Calu3 (cell line): ENCODE measurements at regions of chr2 and their contacts with region 1.

Region 1: DNA sequence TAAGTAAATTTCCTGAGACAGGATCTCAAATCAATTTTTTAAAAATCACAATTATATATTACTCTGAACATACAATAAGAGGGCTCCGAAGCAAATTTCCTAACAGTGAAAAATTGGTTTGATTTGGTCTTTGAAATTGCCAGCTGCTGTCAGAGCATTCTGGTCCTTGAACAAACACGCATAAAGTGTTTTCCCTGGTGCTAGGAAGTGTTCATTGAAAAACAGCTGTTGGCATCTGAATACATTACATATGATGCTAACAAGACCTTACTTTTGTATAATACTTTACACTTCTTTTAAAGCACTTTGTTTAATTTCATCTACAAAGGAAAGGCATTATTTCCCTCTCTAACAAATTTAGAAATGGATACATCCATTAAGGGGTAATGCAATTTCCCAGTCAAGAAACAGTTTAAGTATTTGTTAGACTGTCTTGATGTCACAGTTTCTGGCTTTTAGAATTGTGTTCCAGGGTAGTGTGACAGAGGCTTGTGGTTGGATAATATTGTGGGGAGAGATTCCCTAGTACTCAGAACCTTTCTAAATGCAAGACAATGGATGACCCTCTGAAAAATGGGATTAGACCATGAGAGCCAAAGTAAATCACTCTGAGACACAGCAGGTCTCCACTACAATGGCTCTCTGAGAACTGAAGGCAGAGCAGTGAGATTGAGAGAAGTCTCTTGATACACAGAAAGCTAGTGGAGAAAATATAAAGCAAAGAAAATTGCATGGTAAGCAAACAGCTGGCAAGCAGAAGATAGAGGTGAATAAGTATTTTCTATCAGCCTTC is 299.0 kb downstream of the TRIB2 start:
- DNase-seq: no peak
- H3K4me3 Mint-ChIP-seq: no peak overlapping the region
- H3K27ac Mint-ChIP-seq: no peak overlapping the region
- H3K4me1 Mint-ChIP-seq: no peaks in the 10 kb centered on the region
- H3K27me3 Mint-ChIP-seq: peaks cover 23% of the 10 kb centered on the region
- CTCF ChIP-seq: no peak

Region 2: DNA sequence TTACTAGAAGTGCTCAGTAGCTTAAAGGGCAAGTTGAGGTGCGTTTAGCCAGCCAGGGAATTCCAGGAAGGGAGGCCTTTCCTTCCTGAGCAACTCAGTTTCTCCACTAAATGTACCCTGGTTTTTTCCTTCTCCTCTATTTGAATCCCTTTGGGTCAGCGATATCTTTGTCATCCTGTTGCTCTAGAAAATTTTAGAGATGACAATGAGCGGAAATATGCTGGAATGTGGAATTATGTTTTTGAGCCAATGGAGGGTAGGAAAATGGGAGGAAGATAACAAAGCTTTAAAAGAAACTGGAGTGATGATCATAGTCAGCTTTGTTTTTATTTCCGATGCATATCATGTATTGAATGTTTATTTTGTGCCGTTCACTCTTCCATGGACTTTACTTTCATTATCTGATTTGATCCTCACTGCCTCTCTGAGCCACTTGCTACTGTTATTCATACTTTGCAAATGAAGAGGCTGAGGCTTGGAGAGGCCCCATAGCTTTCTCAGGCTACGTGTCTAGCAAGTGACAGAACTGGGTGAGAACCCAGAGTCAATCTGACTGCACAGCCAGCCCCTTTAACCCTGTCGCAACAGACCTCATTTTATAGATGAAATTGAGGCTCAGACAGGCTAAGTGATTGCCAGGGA is 1413.0 kb before region 1 on chr2:
- CTCF ChIA-PET with region 1: no interaction called
- intact Hi-C with region 1: loop called (anchors 10 kb)
- DNase-seq: no peak
- H3K4me3 Mint-ChIP-seq: no peak overlapping the region
- H3K27ac Mint-ChIP-seq: no peak overlapping the region
- H3K4me1 Mint-ChIP-seq: no peaks in the 10 kb centered on the region
- H3K27me3 Mint-ChIP-seq: peaks cover 35% of the 10 kb centered on the region
- CTCF ChIP-seq: no peak

Region 3: DNA sequence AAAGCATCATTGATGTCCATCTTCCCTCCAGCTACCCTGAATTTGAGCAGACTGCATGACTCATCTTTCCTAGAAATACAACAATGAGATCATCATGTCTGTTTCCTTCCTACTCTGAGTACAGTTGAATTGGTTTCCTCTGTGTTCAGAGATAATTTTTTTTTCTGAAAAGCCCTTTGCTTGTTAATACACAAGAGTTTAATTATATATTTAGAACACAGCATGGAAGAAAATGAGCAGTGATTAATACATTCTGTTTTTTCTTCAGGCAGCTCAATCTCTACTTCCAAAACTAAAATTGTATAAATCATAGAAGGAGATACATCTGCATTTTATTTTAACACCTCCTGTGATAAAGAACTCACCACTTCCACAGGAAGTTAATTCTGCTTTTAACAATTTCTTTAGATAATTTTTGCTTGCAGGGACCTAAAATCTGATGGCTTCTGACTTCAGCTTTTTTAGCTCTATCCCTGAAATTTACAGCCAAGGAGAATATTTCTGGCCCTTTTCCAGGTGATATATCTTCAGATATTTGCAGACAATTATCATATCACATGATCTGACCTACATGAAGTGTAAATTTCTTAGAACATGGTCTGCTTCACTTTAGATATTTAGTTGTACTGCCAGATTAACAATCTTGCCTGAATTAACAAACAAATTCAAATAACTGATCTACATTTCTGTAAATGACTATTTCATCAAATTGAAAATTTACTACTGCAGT is 50.0 kb before region 1 on chr2:
- CTCF ChIA-PET with region 1: no interaction called
- intact Hi-C with region 1: no loop called
- DNase-seq: no peak
- H3K4me3 Mint-ChIP-seq: no peak overlapping the region
- H3K27ac Mint-ChIP-seq: no peak overlapping the region
- H3K4me1 Mint-ChIP-seq: no peaks in the 10 kb centered on the region
- H3K27me3 Mint-ChIP-seq: no peaks in the 10 kb centered on the region
- CTCF ChIP-seq: no peak